Activated naive CD4-positive, alpha-beta T cell treated with anti-CD3 and anti-CD28 coated beads for 36 hours (primary cell): ENCODE measurements at regions of chr4 and their contacts with region 1.

Region 1: DNA sequence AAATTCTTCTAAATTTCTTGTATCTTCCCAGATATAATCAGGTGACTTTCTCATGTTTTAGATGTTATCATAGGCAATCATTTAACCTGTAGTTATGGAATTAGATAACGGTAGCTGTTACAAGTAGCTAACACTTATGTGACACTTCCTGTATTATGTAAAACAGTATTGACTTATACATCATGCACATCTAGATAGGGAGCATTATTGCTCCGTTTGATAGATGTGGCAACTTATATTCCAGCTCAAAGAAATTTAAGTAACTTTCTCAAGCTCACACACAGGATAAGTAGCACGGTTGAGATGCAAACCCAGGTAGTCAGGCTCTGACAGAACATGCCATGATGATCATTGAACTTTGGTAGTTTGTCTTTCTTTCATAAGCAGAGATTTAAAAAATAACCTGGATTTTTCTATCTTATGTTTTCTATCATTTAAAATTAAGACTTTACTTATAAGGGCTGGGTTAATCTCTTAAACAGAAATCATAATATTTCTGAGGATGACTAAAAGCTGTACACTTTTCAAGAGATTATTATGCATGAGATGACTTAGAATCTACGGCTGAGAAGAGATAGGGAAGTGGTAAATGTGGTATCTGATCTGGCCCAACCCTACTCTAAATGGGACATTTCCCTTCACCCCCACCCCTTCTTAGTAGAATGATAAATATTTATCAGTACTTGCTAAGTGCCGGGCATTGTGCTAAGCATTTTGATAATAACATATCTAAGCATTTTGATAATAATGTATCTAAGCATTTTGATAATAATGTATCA is 69.1 kb upstream of the HPGD start:
- DNase-seq: no peak
- H3K4me3 Mint-ChIP-seq: no peak overlapping the region
- H3K27ac Mint-ChIP-seq: no peak overlapping the region
- H3K4me1 Mint-ChIP-seq: peaks cover 7% of the 10 kb centered on the region
- H3K27me3 Mint-ChIP-seq: no peaks in the 10 kb centered on the region

Region 2: DNA sequence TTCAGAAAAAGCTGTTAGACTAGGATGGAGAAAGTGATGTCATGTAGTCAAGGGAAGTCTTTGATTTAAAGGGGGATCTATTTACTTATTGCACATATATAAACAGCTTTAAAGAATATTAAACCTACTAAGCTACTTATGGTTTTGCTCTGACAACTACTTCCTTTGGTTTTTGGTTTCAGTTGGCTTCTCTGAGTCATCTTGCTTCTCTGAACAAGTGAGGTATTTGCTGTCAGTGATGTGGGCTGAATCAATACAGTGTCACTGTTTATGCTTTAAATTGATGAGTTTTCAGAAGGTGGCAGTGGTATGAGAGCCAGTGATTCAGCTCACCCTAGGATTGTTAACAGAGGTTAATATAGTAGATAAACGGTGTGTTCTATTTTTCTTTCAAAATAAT is 232.6 kb before region 1 on chr4:
- CTCF ChIA-PET with region 1: no interaction called
- intact Hi-C with region 1: loop called (anchors 2 kb)
- DNase-seq: peak; percentile 16
- H3K4me3 Mint-ChIP-seq: no peak overlapping the region
- H3K27ac Mint-ChIP-seq: no peak overlapping the region
- H3K4me1 Mint-ChIP-seq: peaks cover 4% of the 10 kb centered on the region
- H3K27me3 Mint-ChIP-seq: peaks cover 28% of the 10 kb centered on the region